ENCODE measurements at regions of chr1 and their contacts with region 1.

Region 1: GRCh38 chr1:12501661-12502060 is 116.3 kb downstream of the DHRS3 start:
- DNase-seq: peak; percentile 25
- H3K4me3 Mint-ChIP-seq: no peak overlapping the region
- H3K27ac Mint-ChIP-seq: peak overlapping the region; percentile 87
- H3K4me1 Mint-ChIP-seq: peaks cover 36% of the 10 kb centered on the region
- H3K27me3 Mint-ChIP-seq: no peaks in the 10 kb centered on the region

Region 2: DNA sequence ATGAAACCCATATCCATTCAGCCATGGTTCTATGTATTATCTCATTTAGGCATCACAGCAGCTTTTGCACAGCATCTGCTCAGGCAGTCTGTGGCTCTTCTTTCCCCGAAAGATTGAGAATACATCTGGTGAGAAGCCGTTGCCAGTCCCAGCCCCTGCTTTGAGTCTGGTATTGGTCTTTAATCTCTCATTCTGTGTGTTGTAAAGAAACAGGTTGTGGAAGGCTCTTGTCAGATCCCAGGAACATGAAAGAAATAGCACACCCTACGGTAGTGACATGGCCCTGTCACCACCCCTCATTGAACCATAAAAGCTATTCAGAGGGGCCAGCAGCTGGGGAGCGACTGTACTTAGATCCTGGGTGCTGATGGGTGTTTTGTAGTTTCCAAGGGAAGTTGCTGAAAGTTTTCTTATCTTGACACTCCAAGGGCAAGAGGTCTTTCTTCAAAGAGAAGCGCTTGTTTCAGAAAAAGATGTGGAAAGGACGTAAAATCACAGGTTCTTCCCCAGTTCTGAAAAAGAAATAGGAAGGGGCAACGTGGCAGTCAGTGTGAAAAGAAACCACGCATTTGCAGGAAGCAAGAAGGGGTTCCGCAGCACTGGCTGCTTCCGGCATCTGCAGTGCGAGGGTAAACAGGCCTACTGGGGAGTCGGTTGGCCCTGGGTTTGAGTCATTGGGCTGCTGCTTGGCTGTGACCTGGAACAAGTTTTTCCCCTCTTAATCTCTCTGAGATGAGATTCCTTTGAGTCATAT is 28.7 kb before region 1 on chr1:
- CTCF ChIA-PET with region 1: interaction called, 5 read pairs
- POLR2A ChIA-PET with region 1: interaction called, 7 read pairs
- intact Hi-C with region 1: loop called (anchors 2 kb)
- DNase-seq: peak; percentile 91
- H3K4me3 Mint-ChIP-seq: peak overlapping the region; percentile 62
- H3K27ac Mint-ChIP-seq: peak overlapping the region; percentile 95
- H3K4me1 Mint-ChIP-seq: peaks cover 87% of the 10 kb centered on the region
- H3K27me3 Mint-ChIP-seq: no peaks in the 10 kb centered on the region

Region 3: GRCh38 chr1:12518931-12519692 is 17.5 kb after region 1 on chr1:
- CTCF ChIA-PET with region 1: no interaction called
- POLR2A ChIA-PET with region 1: interaction called, 5 read pairs
- intact Hi-C with region 1: loop called (anchors 1 kb)
- DNase-seq: peak; percentile 80
- H3K4me3 Mint-ChIP-seq: no peak overlapping the region
- H3K27ac Mint-ChIP-seq: peak overlapping the region; percentile 45
- H3K4me1 Mint-ChIP-seq: peaks cover 28% of the 10 kb centered on the region
- H3K27me3 Mint-ChIP-seq: no peaks in the 10 kb centered on the region